ENCODE measurements at regions of chr4 and their contacts with region 1.

Region 1: DNA sequence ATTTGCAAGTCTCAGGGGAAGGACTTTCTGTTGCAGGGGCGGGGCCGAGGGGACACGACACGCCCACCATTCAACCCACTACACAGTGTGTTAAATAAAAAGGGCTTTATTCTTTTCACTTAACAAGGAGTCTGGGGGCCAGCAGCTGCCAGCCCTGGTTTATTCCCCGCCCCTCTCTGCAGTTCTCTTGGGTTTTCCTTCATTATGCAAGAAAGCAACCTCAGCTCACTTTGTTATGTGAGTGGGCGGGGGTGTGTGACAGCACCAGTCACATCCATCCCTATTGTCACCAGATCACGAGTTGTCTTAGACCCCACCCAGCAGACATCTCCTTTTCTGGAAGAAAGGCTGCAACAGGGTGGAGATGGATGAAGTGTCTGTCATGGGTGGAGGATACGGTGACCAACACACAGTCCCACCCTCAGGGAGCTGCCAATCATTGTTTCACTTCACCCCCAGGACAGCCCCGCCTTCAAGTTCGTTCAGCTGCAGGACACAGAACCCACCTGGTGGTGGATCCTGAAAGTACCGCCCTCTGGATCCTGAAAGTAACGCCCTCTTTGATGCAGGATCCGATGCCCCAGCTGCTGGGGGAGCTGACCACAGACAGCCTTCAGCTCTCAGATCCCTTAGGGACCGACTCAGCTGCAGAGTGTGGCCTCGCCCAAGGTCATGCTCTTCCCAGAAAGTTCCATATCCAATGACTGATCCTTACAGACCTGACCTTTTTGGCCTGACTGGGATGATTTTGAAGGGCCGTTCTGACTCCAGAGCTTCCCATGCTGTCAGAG is 79.6 kb downstream of the SMIM20 start:
- DNase-seq: no peak
- H3K4me3 ChIP-seq: no peak overlapping the region
- H3K27ac ChIP-seq: no peak overlapping the region
- H3K27me3 ChIP-seq: no peaks in the 10 kb centered on the region
- CTCF ChIP-seq: peak; percentile 37; the same call in 1 of the 2 replicates

Region 2: DNA sequence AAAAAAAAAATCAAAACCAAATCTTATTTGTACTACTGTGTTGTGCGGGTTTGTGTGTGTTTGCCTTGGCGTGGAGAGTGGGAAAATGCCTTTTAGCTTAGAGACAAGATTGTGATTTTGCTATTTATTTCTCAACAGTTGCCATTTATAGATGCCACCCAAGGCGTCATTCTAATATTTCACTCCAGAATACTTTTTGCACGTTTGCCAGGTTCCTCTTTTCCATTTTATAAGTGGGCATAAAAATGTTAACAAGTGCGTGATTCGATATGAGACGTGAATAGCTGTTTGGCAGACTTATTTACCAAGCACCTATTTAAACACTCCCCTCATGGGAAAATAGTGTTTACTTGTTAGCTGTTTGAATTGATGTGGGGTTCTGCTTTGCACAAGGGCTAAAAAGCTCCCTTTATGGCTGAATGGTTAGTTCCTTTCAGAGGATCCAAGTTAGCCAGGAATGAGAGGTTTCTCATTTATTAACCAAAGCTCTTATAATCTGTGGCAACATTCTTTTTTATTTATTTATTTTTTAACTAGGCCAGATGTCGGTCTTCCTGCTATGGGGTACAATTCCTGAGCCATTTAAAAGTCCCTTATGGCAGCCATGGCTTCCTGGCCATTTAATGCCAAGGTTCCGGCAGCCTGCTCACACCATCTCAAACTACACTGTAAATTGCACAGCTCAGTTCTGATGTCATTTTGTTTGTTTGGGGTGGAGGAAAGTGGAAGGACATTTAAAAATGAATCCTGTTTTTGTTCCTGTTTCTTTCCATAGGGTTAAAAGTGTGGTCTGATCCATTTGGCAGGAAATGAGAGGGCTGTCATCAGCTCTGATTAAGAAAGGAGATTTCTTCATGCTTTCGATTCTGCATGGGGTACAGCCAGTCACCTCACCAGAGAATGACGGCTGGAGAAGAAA is 65.0 kb before region 1 on chr4:
- CTCF ChIA-PET with region 1: interaction called, 14 read pairs
- POLR2A ChIA-PET with region 1: no interaction called
- DNase-seq: no peak
- H3K4me3 ChIP-seq: no peak overlapping the region
- H3K27ac ChIP-seq: no peak overlapping the region
- H3K27me3 ChIP-seq: no peaks in the 10 kb centered on the region
- CTCF ChIP-seq: no peak

Region 3: GRCh38 chr4:25981749-25982148 is 11.8 kb before region 1 on chr4:
- CTCF ChIA-PET with region 1: interaction called, 20 read pairs
- POLR2A ChIA-PET with region 1: no interaction called
- DNase-seq: no peak
- H3K4me3 ChIP-seq: no peak overlapping the region
- H3K27ac ChIP-seq: no peak overlapping the region
- H3K27me3 ChIP-seq: peaks cover 5% of the 10 kb centered on the region
- CTCF ChIP-seq: no peak

Region 4: DNA sequence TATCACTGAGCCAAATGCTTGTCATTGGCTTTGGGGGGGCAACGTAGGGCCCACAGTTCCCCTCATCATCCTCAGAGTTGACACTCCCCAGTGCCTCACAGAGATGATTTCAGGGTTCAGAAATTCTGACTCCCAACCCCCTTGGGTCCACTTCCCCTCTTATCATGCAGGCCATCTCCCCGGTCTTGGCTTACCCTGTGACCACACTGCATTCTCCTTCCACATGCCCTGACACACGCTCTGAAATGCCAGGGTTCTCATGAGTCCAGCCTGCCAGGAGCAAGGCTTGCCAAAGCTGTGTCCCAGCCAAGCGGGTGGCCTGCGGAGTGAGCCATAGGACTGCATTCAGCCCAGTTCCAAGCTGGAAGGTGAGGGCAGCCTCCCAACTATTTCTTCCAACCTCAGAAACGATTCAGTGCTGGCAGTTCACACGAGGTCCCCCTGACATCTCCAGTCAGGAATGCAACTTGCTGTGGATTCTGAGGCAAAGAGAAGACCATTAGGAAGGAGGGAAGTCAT is 21.6 kb after region 1 on chr4:
- CTCF ChIA-PET with region 1: interaction called, 11 read pairs
- POLR2A ChIA-PET with region 1: no interaction called
- DNase-seq: peak; percentile 80
- H3K4me3 ChIP-seq: no peak overlapping the region
- H3K27ac ChIP-seq: peak overlapping the region; percentile 75
- H3K27me3 ChIP-seq: peaks cover 15% of the 10 kb centered on the region
- CTCF ChIP-seq: no peak

Region 5: GRCh38 chr4:26299254-26299882 is 305.8 kb after region 1 on chr4:
- CTCF ChIA-PET with region 1: no interaction called
- POLR2A ChIA-PET with region 1: no interaction called
- DNase-seq: no peak
- H3K4me3 ChIP-seq: no peak overlapping the region
- H3K27ac ChIP-seq: no peak overlapping the region
- H3K27me3 ChIP-seq: no peaks in the 10 kb centered on the region
- CTCF ChIP-seq: no peak

Region 6: GRCh38 chr4:26325191-26325590 is 331.6 kb after region 1 on chr4:
- CTCF ChIA-PET with region 1: interaction called, 34 read pairs
- POLR2A ChIA-PET with region 1: no interaction called
- DNase-seq: no peak
- H3K4me3 ChIP-seq: no peak overlapping the region
- H3K27ac ChIP-seq: no peak overlapping the region
- H3K27me3 ChIP-seq: no peaks in the 10 kb centered on the region
- CTCF ChIP-seq: peak; percentile 60

Region 7: DNA sequence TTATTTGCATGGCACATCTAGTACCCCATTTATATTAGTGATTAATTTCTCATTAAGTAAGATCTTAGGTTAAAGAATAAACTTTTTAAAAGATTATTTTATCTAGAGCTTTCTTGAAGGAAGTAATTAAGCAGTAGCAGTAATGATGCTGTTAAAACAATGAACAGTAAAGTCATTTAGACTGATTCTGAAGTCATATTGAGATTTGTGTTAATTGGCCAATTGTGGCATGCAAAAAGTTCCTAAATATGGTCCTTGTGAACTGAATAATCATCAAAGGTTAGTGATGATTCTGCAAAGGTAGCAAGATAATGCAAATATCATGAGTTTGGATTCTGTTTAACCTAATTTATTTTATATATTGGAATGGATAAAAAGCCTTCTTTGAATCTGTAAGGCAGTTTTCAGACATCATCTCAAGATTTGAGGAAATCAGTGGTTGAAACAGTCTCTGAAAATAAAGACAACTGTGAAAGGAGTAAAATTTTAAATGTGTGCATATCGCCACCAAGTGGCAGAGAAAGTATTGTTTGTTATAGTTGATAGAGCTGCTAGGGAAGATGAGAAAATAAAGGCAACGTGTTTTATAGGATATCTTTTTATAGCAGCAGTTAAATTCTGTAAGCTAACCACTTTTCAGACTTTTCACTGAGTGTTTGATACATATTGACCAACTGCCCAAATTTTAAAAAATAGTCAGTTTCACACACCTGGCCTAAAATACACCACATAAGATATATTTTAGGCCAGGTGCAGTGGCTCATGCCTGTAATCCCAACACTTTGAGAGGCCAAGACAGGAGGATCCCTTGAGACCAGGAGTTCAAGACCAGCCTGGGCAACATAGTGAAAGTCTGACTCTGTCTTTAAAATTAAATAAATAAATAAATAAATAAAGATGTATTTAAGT is 417.0 kb after region 1 on chr4:
- CTCF ChIA-PET with region 1: interaction called, 37 read pairs
- POLR2A ChIA-PET with region 1: no interaction called
- DNase-seq: no peak
- H3K4me3 ChIP-seq: no peak overlapping the region
- H3K27ac ChIP-seq: no peak overlapping the region
- H3K27me3 ChIP-seq: no peaks in the 10 kb centered on the region
- CTCF ChIP-seq: peak; percentile 61

Region 8: DNA sequence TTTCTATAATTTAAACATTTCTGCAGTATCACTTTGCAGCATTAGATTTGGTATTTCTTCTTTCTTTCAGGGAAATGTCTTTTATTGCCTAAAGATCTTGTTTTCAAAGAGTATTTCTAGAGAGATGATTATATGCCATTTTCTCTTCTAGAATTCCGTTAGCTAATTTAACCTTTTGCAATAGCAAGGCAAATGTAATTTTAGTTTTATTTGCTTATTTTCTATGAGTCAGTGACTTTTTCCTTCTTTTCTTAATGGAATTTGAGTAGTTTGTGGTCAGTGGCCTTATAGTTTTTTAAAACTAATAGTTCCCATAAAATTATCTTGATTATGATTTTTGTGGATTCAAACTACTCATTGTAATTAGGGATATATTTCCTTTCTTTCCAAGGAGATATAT is 424.5 kb after region 1 on chr4:
- CTCF ChIA-PET with region 1: interaction called, 12 read pairs
- POLR2A ChIA-PET with region 1: no interaction called
- DNase-seq: no peak
- H3K4me3 ChIP-seq: no peak overlapping the region
- H3K27ac ChIP-seq: no peak overlapping the region
- H3K27me3 ChIP-seq: no peaks in the 10 kb centered on the region
- CTCF ChIP-seq: no peak

Measured in AG04450 (cell line).